Heart right ventricle (tissue), 16 donors: ENCODE measurements at regions of chrX and their contacts with region 1.

Region 1: GRCh38 chrX:139382529-139382928 is 148.0 kb upstream of the F9 start:
- DNase-seq: no peak
- ATAC-seq: no peak
- H3K4me3 ChIP-seq: no peak overlapping the region
- H3K27ac ChIP-seq: no peak overlapping the region
- H3K4me1 ChIP-seq: no peaks in the 10 kb centered on the region
- H3K27me3 ChIP-seq: peaks cover 0 to 18% (median 0%) of the 10 kb centered on the region in 7 donors
- CTCF ChIP-seq: no peak

Region 2: GRCh38 chrX:137482136-137482535 is 1900.4 kb before region 1 on chrX:
- intact Hi-C with region 1: loop called in 1 of 10 experiments (anchors 5 kb)
- DNase-seq: no peak
- ATAC-seq: no peak
- H3K4me3 ChIP-seq: no peak overlapping the region
- H3K27ac ChIP-seq: no peak overlapping the region
- H3K4me1 ChIP-seq: no peaks in the 10 kb centered on the region
- H3K27me3 ChIP-seq: peaks cover 0 to 25% (median 0%) of the 10 kb centered on the region in 7 donors
- CTCF ChIP-seq: no peak